ENCODE measurements at regions of chr3 and their contacts with region 1.

Region 1: GRCh38 chr3:125556314-125556713 is 36.3 kb upstream of the SNX4 start:
- DNase-seq: no peak
- ATAC-seq: peak in 1 of 2 donors; percentile 14
- H3K4me3 ChIP-seq: no peak overlapping the region
- H3K27ac ChIP-seq: no peak overlapping the region
- H3K4me1 ChIP-seq: no peaks in the 10 kb centered on the region
- H3K27me3 ChIP-seq: no peaks in the 10 kb centered on the region
- CTCF ChIP-seq: no peak
- POLR2A ChIP-seq: no peak

Region 2: DNA sequence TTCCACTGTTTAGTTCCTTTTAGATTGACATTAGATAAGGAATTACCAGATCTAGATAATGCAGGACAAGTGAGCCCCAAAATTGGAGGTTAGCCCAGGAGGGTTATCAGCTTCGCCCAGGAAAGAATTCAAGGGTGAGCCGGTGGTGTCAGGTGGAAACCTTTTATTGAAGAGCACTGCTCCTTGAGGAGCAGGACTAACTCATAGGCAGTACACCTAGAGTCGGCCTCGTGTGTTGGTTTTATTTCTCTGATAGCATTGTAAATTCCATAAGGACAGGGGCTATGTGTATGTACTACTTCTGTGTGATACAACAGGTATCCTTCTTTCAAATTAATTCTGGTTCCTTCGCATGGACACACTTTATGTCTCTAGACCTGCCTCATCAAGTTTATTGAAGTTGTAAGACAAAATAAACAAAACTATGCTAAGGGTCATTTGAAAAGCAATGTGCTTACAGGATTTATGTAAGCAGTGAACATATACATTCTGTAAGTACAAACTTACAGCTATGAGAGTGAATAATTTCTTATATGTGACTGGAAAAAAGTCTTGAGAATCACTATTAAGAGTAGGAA is 93.5 kb before region 1 on chr3:
- in situ Hi-C with region 1: loop called in 1 of 4 experiments (anchors 25 kb)
- intact Hi-C with region 1: no loop called
- DNase-seq: no peak
- ATAC-seq: no peak
- H3K4me3 ChIP-seq: no peak overlapping the region
- H3K27ac ChIP-seq: no peak overlapping the region
- H3K4me1 ChIP-seq: no peaks in the 10 kb centered on the region
- H3K27me3 ChIP-seq: no peaks in the 10 kb centered on the region
- CTCF ChIP-seq: no peak
- POLR2A ChIP-seq: no peak

Region 3: DNA sequence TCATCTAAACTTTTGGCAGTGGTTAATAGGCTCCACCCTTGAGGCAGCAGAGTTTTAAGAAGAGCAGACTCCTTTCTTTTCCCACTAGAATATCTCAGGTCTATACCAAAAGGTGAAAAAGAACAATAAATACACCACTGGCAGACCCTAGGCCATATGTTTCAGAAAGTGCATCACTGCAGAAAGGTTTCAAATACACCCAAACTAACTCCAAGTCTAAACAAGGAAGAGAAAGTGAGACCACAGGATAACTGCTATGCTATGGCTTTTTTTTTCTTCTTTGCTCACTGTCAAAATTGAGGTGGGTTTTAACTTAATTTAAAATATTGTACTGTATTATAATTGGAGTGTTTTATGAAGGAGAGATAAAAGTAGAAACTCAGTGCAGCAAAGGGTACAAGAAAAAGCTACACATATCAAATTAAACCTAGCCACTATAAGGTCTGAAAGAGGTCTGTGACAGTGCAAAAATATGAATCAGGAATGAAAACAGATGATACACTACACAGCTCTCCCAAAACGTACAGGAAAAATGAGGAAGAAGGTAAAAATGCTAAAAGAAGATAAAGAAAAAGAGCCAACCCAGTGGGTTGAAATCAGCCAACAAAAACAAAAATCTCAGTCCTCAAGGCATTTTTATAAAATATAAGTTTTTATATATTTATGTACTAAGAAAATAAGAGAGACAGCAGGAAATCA is 44.7 kb before region 1 on chr3:
- in situ Hi-C with region 1: no loop called
- intact Hi-C with region 1: no loop called
- DNase-seq: no peak
- ATAC-seq: no peak
- H3K4me3 ChIP-seq: no peak overlapping the region
- H3K27ac ChIP-seq: peak overlapping the region in 2 of 4 donors; percentile 11 to 44
- H3K4me1 ChIP-seq: peaks cover 11% of the 10 kb centered on the region in 2 donors
- H3K27me3 ChIP-seq: no peaks in the 10 kb centered on the region
- CTCF ChIP-seq: no peak
- POLR2A ChIP-seq: no peak

Region 4: GRCh38 chr3:125622381-125622788 is 66.1 kb after region 1 on chr3:
- in situ Hi-C with region 1: no loop called
- intact Hi-C with region 1: no loop called
- DNase-seq: peak; percentile 96 to 97
- ATAC-seq: peak; percentile 90 to 93
- H3K4me3 ChIP-seq: no peak overlapping the region
- H3K27ac ChIP-seq: peak overlapping the region; percentile 98 to 99 (median 98)
- H3K4me1 ChIP-seq: peaks cover 29 to 44% of the 10 kb centered on the region in 2 donors
- H3K27me3 ChIP-seq: no peaks in the 10 kb centered on the region
- CTCF ChIP-seq: no peak
- POLR2A ChIP-seq: peak; percentile 55 to 72

Measured in gastrocnemius medialis (tissue), 4 donors.